ENCODE measurements at regions of chr12 and their contacts with region 1.

Region 1: DNA sequence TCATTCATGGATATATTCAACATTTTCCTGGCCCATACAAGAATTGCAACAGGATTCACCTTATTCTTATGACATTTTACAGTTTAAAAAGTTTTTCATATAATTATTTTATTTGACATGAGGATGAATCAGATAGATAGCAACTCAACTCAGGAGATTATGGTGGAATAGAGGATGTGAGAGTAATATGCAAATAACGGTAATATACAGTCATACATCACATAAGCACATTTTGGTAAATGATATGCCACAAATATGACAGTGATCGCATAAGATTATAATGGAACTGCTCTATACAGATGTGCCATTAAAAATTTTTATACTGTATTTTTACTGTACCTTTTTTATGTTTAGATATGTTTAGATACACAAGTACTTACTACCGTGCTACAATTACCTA is 24.1 kb upstream of the CRADD start:
- DNase-seq: no peak
- H3K4me3 ChIP-seq: no peak overlapping the region
- H3K27ac ChIP-seq: no peak overlapping the region
- H3K4me1 ChIP-seq: no peaks in the 10 kb centered on the region
- H3K27me3 ChIP-seq: no peaks in the 10 kb centered on the region
- CTCF ChIP-seq: no peak
- EP300 ChIP-seq: no peak
- POLR2A ChIP-seq: no peak

Region 2: DNA sequence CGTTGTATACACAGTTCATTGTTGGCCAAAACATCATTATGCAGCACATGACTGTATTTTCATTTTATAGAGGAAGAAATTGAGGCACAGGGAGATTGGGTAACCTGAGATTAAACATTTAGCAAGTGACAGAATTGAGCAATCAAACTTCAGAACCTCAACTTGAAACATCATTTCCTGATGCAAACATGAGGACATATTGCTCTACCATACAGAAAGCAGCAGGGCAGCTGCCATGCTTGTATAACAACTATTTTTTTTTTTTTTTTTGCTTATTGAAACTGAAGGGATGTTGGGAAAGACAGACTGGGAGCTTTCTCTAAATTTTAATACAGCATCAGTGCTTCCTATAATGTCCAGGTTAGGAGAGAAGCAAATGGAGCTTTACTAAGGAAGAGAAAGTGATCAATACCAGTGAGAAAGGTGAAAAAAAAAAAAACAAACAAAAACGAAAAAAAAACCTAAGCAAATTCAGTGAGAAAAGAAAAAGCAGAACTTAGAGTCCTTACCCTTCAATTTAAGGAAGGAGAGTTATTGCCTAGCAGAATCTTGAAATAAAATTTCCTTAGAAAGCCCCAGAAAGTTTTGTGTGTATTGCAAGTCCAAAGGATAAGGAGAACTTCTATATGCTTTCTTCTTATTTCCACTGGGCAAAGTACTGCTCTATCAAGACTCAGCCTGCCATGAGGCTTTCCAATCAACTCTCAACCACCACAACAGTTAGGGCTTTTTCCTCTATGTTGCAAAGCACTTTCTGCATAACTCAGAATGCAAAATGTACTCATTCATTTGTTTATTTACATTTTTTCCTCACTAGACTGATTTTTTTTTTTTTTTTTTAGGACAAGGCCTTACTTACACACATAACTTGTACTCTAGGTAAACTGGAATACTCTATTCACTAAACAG is 1529.0 kb before region 1 on chr12:
- in situ Hi-C with region 1: no loop called
- intact Hi-C with region 1: loop called (anchors 5 kb)
- DNase-seq: no peak
- H3K4me3 ChIP-seq: no peak overlapping the region
- H3K27ac ChIP-seq: peak overlapping the region in 1 of 4 donors; percentile 27
- H3K4me1 ChIP-seq: peaks cover 0 to 4% (median 0%) of the 10 kb centered on the region in 4 donors
- H3K27me3 ChIP-seq: no peaks in the 10 kb centered on the region
- CTCF ChIP-seq: no peak
- EP300 ChIP-seq: no peak
- POLR2A ChIP-seq: no peak

Region 3: DNA sequence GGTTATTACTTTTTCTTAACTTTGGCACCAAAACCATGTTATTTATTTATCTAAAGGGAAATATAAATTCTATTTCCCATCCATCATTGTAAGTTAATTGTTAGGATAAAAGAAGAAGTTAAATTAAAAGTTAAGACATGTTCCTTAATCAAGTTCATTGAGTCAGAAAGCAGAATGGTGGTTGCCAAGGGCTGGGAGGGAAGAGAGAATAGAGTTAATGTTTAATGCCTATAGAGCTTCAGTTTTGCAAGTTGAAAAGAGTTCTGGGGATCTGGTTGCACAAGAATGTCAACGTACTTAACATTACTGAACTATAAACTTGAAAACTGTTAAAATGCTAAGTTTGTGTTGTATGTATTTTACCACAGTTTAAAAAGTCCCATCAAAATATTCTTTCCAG is 1483.5 kb after region 1 on chr12:
- in situ Hi-C with region 1: no loop called
- intact Hi-C with region 1: no loop called
- DNase-seq: no peak
- H3K4me3 ChIP-seq: no peak overlapping the region
- H3K27ac ChIP-seq: no peak overlapping the region
- H3K4me1 ChIP-seq: no peaks in the 10 kb centered on the region
- H3K27me3 ChIP-seq: no peaks in the 10 kb centered on the region
- CTCF ChIP-seq: no peak
- EP300 ChIP-seq: no peak
- POLR2A ChIP-seq: no peak

Measured in transverse colon (tissue), 4 donors.